ENCODE measurements at regions of chr19 and their contacts with region 1.

Region 1: GRCh38 chr19:14472202-14472938 is 2.8 kb downstream of the PTGER1 start:
- DNase-seq: no peak
- H3K4me3 ChIP-seq: peak overlapping the region; percentile 26 to 29
- H3K27ac ChIP-seq: no peak overlapping the region
- H3K4me1 ChIP-seq: peaks cover 39% of the 10 kb centered on the region
- H3K27me3 ChIP-seq: no peaks in the 10 kb centered on the region
- CTCF ChIP-seq: peak; percentile 86 to 98 (median 92)
- POLR2A ChIP-seq: no peak

Region 2: GRCh38 chr19:14147797-14148605 is 324.4 kb before region 1 on chr19:
- intact Hi-C with region 1: loop called (anchors 10 kb)
- DNase-seq: no peak
- H3K4me3 ChIP-seq: peak overlapping the region in 1 of 2 donors; percentile 22
- H3K27ac ChIP-seq: peak overlapping the region; percentile 86
- H3K4me1 ChIP-seq: peaks cover 29% of the 10 kb centered on the region
- H3K27me3 ChIP-seq: no peaks in the 10 kb centered on the region
- CTCF ChIP-seq: peak; percentile 73 to 87 (median 85)
- POLR2A ChIP-seq: no peak

Region 3: GRCh38 chr19:14366498-14366915 is 105.9 kb before region 1 on chr19:
- intact Hi-C with region 1: loop called (anchors 10 kb)
- DNase-seq: no peak
- H3K4me3 ChIP-seq: no peak overlapping the region
- H3K27ac ChIP-seq: no peak overlapping the region
- H3K4me1 ChIP-seq: peaks cover 15% of the 10 kb centered on the region
- H3K27me3 ChIP-seq: no peaks in the 10 kb centered on the region
- CTCF ChIP-seq: no peak
- POLR2A ChIP-seq: no peak

Region 4: DNA sequence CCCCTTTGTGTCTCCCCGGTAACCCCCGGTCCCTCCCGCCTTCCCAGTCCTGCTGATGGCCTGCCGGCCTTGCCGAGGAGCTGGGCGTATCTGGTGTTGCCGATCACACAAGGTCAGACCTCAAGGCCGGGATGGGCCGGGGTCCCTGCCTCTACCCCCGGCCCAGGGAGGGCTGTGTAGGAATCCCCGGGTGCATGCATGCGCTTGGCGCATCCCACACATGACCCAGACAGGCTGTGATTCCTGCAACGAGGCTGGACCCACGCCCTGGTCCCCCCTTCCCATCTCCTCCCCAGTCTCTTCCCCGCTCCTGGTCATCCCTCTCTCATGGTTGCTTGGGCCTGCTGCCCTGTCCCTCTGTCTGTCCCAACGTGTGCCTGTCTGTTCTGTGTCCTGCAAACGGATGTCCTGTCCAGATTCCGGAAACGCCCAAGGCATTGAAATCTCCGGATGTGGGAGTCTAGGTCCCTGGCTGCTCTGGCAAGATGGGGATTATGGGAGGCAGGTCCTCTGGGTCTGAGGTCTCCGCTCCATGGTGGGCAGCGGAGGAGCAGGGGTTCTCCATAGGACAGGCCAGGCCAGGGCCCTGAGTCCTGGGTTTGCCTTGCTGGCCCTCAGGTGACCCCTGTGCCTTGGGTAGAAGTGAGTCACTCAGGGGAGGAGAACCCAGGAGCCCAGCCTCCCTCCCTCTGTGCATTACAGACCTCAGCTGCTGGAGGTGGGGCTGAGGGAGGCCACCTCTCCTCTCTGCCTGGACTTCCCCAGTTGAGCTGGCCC is 37.6 kb before region 1 on chr19:
- intact Hi-C with region 1: loop called (anchors 5 kb)
- DNase-seq: peak in 1 of 2 donors; percentile 92
- H3K4me3 ChIP-seq: peak overlapping the region; percentile 85 to 96
- H3K27ac ChIP-seq: peak overlapping the region; percentile 91
- H3K4me1 ChIP-seq: peaks cover 50% of the 10 kb centered on the region
- H3K27me3 ChIP-seq: no peaks in the 10 kb centered on the region
- CTCF ChIP-seq: no peak
- POLR2A ChIP-seq: no peak

Region 5: GRCh38 chr19:14517840-14518505 is 45.6 kb after region 1 on chr19 and contains the start of gene DNAJB1:
- intact Hi-C with region 1: no loop called
- DNase-seq: peak in 1 of 2 donors; percentile 93
- H3K4me3 ChIP-seq: peak within 1 kb of the TSS; percentile 70 to 91
- H3K27ac ChIP-seq: peak within 1 kb of the TSS; percentile 100
- H3K4me1 ChIP-seq: peaks cover 39% of the 10 kb centered on the region
- H3K27me3 ChIP-seq: no peaks in the 10 kb centered on the region
- CTCF ChIP-seq: no peak
- POLR2A ChIP-seq: peak; percentile 92 to 98
- total RNA-seq, gene DNAJB1: 164 TPM

Measured in vagina (tissue), 2 donors.